ENCODE measurements at regions of chr15 and their contacts with region 1.

Region 1: GRCh38 chr15:40274350-40275274 is 8.3 kb downstream of the ANKRD63 start:
- DNase-seq: peak; percentile 82
- H3K4me3 Mint-ChIP-seq: no peak overlapping the region
- H3K27ac Mint-ChIP-seq: no peak overlapping the region
- H3K4me1 Mint-ChIP-seq: peaks cover 8% of the 10 kb centered on the region
- H3K27me3 Mint-ChIP-seq: peaks cover 32% of the 10 kb centered on the region

Region 2: GRCh38 chr15:39657714-39658113 is 616.9 kb before region 1 on chr15:
- intact Hi-C with region 1: no loop called
- DNase-seq: no peak
- H3K4me3 Mint-ChIP-seq: no peak overlapping the region
- H3K27ac Mint-ChIP-seq: no peak overlapping the region
- H3K4me1 Mint-ChIP-seq: no peaks in the 10 kb centered on the region
- H3K27me3 Mint-ChIP-seq: peaks cover 27% of the 10 kb centered on the region

Region 3: GRCh38 chr15:39788108-39788507 is 486.5 kb before region 1 on chr15:
- intact Hi-C with region 1: loop called (anchors 1 kb)
- DNase-seq: no peak
- H3K4me3 Mint-ChIP-seq: no peak overlapping the region
- H3K27ac Mint-ChIP-seq: no peak overlapping the region
- H3K4me1 Mint-ChIP-seq: peaks cover 46% of the 10 kb centered on the region
- H3K27me3 Mint-ChIP-seq: peaks cover 6% of the 10 kb centered on the region

Region 4: GRCh38 chr15:40038638-40039543 is 235.7 kb before region 1 on chr15 and contains the start of gene SRP14:
- intact Hi-C with region 1: loop called (anchors 2 kb)
- DNase-seq: peak; percentile 87
- H3K4me3 Mint-ChIP-seq: peak within 1 kb of the TSS; percentile 91
- H3K27ac Mint-ChIP-seq: peak within 1 kb of the TSS; percentile 95
- H3K4me1 Mint-ChIP-seq: peaks cover 44% of the 10 kb centered on the region
- H3K27me3 Mint-ChIP-seq: no peaks in the 10 kb centered on the region
- total RNA-seq, gene SRP14: 160 and 167 TPM in 2 replicates

Region 5: DNA sequence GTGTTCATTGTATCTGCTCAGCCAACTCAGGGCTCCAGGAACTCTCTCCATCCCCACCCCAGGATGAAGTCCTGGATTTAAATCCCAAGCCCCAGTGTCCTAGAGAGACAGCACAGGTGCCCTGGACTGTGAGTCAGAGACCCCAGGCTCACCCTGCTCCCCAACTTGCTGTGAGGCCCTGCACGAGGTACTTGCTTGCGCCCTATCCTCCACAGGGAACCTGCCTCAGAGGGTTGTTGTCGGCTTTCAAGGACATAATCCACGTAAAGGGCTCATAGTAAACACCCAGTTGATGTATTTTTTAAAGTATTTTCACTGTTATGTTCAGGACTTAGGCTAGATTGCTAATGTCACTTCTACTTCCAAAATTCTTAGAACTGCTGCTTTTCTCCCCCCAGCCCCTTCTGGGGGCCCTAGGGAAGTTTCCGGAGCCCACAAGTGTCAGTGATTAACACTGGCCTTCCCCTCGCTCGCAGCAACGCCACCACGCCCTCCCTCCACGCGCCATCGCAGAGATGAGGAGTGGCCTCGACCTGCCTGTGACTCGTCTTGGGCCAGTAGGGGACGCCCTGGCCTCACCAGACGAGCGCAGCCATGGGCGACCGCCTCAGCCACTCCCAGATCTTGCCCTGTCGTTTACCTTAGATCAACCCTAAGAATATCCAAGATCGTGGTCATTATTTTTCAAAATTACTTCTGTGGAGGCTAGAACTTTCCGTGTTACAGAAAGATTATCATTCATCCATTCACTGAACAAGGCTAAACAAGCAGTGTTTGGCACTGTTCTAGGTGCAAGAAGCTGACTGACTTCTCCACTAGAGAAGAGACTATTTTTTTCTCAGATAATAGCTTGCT is 229.7 kb before region 1 on chr15:
- intact Hi-C with region 1: loop called (anchors 1 kb)
- DNase-seq: peak; percentile 77
- H3K4me3 Mint-ChIP-seq: peak overlapping the region; percentile 11
- H3K27ac Mint-ChIP-seq: peak overlapping the region; percentile 82
- H3K4me1 Mint-ChIP-seq: peaks cover 70% of the 10 kb centered on the region
- H3K27me3 Mint-ChIP-seq: no peaks in the 10 kb centered on the region

Region 6: DNA sequence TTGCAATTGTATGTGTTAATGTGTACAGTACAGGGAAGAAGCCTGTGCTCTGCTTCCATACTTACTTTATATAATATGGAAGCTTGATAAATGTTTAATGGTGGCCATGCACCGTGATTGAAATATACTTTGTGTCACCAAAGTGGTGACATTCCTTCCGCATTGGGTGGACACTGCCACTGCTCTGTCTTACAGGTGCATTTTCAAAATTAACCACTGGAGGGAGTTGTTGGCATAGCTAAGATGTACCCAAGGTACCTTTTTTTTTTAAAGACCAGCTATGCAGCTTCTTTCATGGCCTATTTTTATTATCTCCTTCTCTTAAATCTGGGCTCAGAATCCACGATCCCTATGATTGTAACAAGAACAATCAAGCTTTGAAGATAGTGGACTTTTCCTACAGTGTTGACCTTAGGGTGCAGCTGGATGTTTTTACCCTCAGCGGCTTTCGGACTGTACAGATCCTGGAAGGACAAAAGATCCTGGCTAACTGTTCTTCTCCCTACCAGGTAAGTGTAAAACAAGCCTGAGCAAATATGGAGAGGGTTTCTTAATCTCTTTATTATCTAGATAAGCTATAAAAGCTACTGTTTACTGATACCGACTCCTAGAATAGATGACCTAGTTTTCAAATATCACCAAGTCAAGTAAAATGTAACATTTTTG is 57.3 kb before region 1 on chr15:
- intact Hi-C with region 1: loop called (anchors 1 kb)
- DNase-seq: peak; percentile 28
- H3K4me3 Mint-ChIP-seq: no peak overlapping the region
- H3K27ac Mint-ChIP-seq: no peak overlapping the region
- H3K4me1 Mint-ChIP-seq: no peaks in the 10 kb centered on the region
- H3K27me3 Mint-ChIP-seq: no peaks in the 10 kb centered on the region

Region 7: GRCh38 chr15:40290918-40291574 is 16.4 kb after region 1 on chr15:
- intact Hi-C with region 1: no loop called
- DNase-seq: no peak
- H3K4me3 Mint-ChIP-seq: no peak overlapping the region
- H3K27ac Mint-ChIP-seq: no peak overlapping the region
- H3K4me1 Mint-ChIP-seq: no peaks in the 10 kb centered on the region
- H3K27me3 Mint-ChIP-seq: no peaks in the 10 kb centered on the region

Region 8: GRCh38 chr15:40307421-40308211 is 33.0 kb after region 1 on chr15 and contains the start of gene PLCB2:
- intact Hi-C with region 1: loop called (anchors 1 kb)
- DNase-seq: peak; percentile 68
- H3K4me3 Mint-ChIP-seq: peak within 1 kb of the TSS; percentile 90
- H3K27ac Mint-ChIP-seq: peak within 1 kb of the TSS; percentile 97
- H3K4me1 Mint-ChIP-seq: peaks cover 28% of the 10 kb centered on the region
- H3K27me3 Mint-ChIP-seq: peaks cover 10% of the 10 kb centered on the region
- total RNA-seq, gene PLCB2: 96.3 and 98.9 TPM in 2 replicates

Region 9: GRCh38 chr15:40338041-40338657 is 63.5 kb after region 1 on chr15:
- intact Hi-C with region 1: loop called (anchors 1 kb)
- DNase-seq: peak; percentile 69
- H3K4me3 Mint-ChIP-seq: no peak overlapping the region
- H3K27ac Mint-ChIP-seq: no peak overlapping the region
- H3K4me1 Mint-ChIP-seq: peaks cover 10% of the 10 kb centered on the region
- H3K27me3 Mint-ChIP-seq: no peaks in the 10 kb centered on the region

Region 10: DNA sequence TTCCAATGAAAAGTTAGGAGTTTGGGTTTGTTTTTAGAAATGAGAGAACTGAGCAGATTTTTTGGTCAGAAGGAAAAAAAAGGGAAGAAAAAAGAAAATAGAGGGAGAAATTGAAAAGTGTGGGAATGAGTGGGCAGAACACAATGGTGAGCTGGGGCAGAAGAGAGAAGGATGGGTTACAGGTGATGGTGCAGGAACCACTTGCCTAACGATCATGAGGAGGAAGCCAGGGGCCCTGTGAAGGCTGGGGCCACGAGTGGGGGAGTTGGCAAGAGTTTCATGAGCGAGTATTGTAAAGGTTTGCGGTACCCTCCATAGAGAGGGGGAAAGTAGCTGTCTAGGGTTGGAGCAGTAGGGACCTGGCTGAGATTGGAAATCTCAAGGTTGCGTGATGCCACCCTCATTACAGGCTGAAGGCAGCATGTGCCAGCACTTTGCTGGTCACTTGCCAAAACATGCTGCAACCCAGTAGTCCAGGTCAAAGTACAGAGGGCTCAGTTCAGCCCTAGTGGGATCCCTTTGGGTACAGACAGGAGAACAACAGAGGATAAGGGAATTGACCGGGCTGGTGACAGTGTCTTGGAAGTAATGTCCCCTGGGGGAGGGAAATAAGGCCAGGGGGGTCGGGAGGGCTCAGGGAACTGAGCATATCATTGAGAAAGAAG is 137.6 kb after region 1 on chr15:
- intact Hi-C with region 1: no loop called
- DNase-seq: no peak
- H3K4me3 Mint-ChIP-seq: no peak overlapping the region
- H3K27ac Mint-ChIP-seq: peak overlapping the region; percentile 1
- H3K4me1 Mint-ChIP-seq: peaks cover 25% of the 10 kb centered on the region
- H3K27me3 Mint-ChIP-seq: no peaks in the 10 kb centered on the region